ENCODE measurements at regions of chr11 and their contacts with region 1.

Region 1: DNA sequence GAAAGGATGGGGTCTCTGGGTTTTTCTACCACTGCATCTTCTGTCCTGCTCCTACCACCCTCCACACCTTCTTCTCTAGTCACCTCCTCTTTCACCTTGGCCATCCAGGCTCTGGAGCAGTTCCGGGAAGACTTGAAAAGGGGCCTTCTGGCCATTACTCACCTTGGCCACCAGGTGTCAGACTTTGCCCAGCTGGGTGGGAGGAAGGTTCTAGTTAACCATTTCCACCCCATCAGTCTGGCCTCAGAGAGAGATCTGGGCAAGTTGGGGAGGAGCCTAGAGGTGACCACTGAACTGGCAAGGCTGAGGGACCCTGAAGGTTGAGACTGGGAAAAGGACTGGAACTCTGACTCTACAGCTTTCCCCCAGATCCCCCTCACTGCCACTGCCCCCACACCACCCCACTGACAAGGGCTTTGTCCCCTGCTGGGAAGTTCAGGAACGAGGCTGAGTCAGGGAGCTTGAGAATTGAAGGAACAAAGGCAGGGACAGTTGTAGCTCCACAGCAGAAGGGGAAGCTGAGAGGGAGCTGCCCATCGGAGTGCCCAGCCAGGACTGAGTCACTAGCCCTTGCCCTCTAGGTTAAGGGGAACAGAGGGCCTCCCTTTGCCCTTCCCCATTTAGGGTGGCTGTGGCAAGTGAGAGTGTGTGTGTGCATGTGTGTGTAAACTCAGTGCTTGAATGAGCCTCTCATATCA is 3.7 kb upstream of the POLD4 start:
- DNase-seq: peak in 1 of 2 donors; percentile 79
- ATAC-seq: peak; percentile 20 to 37 (median 30)
- H3K4me3 ChIP-seq: no peak overlapping the region
- H3K27ac ChIP-seq: peak overlapping the region; percentile 99
- H3K4me1 ChIP-seq: peaks cover 40% of the 10 kb centered on the region
- H3K27me3 ChIP-seq: no peaks in the 10 kb centered on the region
- CTCF ChIP-seq: peak; percentile 89

Region 2: DNA sequence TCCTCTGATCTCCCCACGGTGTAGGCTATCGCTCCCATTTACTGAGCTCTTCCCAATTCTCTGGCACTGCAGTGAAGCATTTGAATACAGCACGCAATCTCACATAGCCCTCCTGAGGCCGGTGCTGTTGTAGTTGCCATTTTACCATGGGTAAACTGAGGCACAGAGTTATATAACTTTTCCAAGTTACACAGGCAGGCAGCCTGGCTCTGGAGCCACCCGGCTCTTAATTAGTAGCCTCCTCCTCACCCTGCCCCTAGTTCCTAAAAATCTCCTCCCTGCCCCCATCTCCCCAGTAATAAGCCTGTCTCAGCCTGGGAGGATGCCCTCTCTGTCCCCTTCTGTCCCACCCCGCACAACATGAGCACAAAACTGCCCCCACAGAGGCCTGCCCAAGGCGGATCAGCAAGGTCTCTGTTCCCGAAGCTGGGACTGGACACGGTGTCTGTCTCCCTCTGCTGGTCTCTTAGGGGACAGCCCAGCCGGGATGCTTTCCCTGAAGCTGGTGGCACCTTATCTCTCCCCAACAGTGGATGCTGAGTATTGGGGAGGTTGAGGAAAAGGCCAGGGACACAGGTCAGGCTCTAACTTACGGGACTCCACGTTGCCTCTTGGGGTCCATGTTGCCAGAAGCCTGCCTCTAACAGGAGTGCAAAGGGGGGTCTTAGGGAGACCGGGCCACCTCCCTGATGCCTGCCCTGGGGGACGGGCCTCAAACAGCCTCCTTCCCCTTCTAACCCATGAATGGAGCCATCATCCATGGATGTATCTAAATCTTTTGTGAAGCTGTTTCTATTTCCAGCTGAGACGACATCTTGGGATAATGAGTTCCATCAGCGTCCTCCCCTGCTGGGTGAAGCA is 25.5 kb after region 1 on chr11:
- intact Hi-C with region 1: loop called (anchors 1 to 2 kb)
- DNase-seq: peak; percentile 80 to 86
- ATAC-seq: peak; percentile 86 to 95 (median 91)
- H3K4me3 ChIP-seq: no peak overlapping the region
- H3K27ac ChIP-seq: no peak overlapping the region
- H3K4me1 ChIP-seq: no peaks in the 10 kb centered on the region
- H3K27me3 ChIP-seq: no peaks in the 10 kb centered on the region
- CTCF ChIP-seq: peak; percentile 96